ENCODE measurements at regions of chr2 and their contacts with region 1.

Region 1: DNA sequence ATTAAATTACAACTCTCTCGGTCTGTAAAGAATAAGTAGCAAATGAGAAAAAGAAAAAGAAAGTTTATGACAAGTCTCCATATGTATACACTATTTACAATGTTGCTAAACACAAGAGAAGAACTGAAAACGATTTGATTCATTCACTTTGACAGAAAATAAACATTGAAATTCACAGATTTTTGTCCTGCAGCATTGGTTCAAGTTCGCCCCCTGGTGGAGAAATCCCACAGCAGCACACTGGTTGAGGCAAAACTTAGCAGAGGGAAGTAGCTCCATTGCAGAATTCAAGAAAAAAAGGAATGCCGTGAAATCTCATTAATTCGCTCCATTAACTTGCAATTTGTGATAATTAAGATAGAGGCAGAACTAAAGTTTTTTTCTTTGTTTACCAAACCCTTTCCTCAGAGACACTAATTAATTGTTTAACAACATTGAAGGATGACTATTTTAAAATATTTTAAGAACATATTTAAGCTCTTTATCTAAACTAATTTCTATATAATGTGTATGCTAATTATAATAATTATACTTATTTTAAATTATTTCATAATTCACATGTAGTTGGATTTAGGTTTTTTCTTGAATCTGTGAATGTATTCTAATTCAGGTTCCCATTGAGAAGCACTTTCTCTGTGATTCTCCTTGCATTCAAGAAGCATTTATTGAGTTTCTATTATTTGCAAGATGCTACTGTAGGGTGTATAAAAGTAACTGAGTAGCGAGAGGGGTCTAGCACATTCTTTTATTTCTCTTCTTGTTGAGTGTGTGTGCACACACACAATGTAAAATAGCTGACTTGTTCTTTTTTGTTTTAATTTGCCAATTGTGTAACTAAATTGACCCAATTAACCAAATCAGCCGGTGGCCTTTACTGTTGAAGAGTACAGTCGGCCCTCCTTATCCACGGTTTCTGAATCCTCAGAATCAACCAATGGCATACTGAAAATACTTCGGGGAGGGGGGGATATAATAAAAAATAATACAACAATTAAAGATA is 74.1 kb downstream of the COL4A3 start:
- DNase-seq: peak; percentile 43
- H3K4me3 ChIP-seq: no peak overlapping the region
- H3K27ac ChIP-seq: no peak overlapping the region
- H3K27me3 ChIP-seq: peaks cover 5% of the 10 kb centered on the region
- CTCF ChIP-seq: peak; percentile 98

Region 2: GRCh38 chr2:227117027-227117426 is 121.5 kb before region 1 on chr2:
- CTCF ChIA-PET with region 1: interaction called, 11 read pairs
- POLR2A ChIA-PET with region 1: no interaction called
- DNase-seq: no peak
- H3K4me3 ChIP-seq: no peak overlapping the region
- H3K27ac ChIP-seq: no peak overlapping the region
- H3K27me3 ChIP-seq: peaks cover 2% of the 10 kb centered on the region
- CTCF ChIP-seq: no peak

Region 3: DNA sequence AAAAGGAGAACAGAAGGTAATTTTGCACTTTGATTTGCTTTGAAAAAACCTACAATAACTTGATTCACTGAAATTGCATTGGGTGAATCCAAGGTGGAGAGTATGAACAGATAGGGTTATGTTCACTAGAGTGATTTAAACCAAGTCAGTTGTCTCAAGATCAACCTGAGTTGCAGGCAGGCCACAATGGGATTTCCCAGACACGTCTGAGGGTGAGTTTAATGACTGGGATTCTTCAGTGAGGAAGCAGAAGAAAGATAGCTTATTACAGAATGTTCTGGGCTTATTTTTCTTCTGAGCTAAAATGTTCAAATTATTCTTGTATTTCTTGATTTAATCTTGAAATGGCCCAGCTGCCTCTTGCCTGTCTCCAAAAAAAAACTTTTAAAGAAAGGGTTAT is 94.6 kb before region 1 on chr2:
- CTCF ChIA-PET with region 1: interaction called, 10 read pairs
- POLR2A ChIA-PET with region 1: no interaction called
- DNase-seq: no peak
- H3K4me3 ChIP-seq: no peak overlapping the region
- H3K27ac ChIP-seq: no peak overlapping the region
- H3K27me3 ChIP-seq: peaks cover 2% of the 10 kb centered on the region
- CTCF ChIP-seq: no peak

Region 4: GRCh38 chr2:227214622-227215041 is 23.9 kb before region 1 on chr2:
- CTCF ChIA-PET with region 1: interaction called, 13 read pairs
- POLR2A ChIA-PET with region 1: no interaction called
- DNase-seq: no peak
- H3K4me3 ChIP-seq: no peak overlapping the region
- H3K27ac ChIP-seq: no peak overlapping the region
- H3K27me3 ChIP-seq: no peaks in the 10 kb centered on the region
- CTCF ChIP-seq: no peak

Region 5: GRCh38 chr2:227256605-227257004 is 18.1 kb after region 1 on chr2:
- CTCF ChIA-PET with region 1: interaction called, 60 read pairs
- POLR2A ChIA-PET with region 1: no interaction called
- DNase-seq: no peak
- H3K4me3 ChIP-seq: no peak overlapping the region
- H3K27ac ChIP-seq: no peak overlapping the region
- H3K27me3 ChIP-seq: no peaks in the 10 kb centered on the region
- CTCF ChIP-seq: no peak

Region 6: GRCh38 chr2:227308784-227309183 is 70.2 kb after region 1 on chr2:
- CTCF ChIA-PET with region 1: interaction called, 13 read pairs
- POLR2A ChIA-PET with region 1: no interaction called
- DNase-seq: no peak
- H3K4me3 ChIP-seq: no peak overlapping the region
- H3K27ac ChIP-seq: no peak overlapping the region
- H3K27me3 ChIP-seq: no peaks in the 10 kb centered on the region
- CTCF ChIP-seq: no peak

Region 7: DNA sequence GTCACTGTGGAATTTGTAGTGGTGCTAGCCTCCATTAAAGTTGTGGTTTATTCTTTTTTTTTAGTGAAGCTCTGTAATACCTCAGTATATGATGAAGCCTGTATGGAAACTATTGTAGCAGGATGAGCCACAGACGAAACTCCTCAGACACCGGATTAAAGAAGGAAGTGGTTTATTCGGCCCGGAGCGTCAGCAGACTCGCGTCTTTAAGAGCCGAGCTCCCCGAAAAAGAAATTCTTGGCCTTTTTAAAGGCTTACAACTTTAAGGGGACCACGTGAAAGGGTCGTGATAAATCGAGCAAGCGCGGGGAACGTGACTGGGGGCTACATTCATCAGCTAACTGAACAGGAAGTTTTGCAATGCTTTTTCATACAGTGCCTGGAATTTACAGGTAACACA is 567.0 kb after region 1 on chr2:
- CTCF ChIA-PET with region 1: no interaction called
- POLR2A ChIA-PET with region 1: no interaction called
- DNase-seq: no peak
- H3K4me3 ChIP-seq: no peak overlapping the region
- H3K27ac ChIP-seq: no peak overlapping the region
- H3K27me3 ChIP-seq: no peaks in the 10 kb centered on the region
- CTCF ChIP-seq: no peak